CD4-positive, alpha-beta memory T cell (primary cell): ENCODE measurements at regions of chrX and their contacts with region 1.

Region 1: DNA sequence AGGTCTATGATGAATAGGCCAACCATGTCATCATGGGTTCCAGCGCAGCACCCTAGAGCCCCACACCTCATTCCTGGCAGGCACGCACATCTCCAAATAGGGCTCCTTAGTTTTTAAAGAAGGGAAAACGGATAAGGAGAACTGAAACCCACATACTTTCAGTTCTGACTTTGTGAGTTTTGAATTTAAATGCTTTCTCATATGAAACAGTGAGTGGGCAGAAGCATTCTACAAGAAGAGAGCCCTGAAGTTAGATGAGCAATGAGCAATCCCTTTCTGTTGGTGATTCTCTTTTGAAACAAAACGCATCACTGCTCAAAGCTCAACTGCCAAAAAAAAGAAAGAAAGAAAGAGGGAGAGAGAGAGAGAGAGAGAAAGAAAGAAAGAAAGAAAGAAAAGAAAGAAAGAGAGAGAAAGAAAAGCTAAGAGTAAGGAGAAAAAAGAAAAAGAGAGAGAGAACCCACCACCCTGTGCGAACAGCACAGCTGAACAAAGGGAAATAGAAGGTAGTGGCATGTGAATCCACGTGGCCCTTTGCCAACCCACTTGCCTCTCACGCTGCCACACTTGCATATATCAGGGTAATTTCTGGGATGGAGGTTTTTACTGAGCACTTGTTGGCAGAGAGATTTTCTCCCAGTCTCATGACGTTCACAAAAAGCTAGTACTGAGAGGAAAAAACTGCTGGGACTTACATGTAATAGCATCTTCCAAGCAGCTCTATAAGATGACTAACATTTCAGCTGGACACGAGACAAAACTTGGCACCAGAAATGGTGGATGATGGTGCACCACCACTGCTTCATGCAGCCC is 31.0 kb downstream of the TMSB4X start:
- DNase-seq: no peak
- H3K4me3 ChIP-seq: no peak overlapping the region
- H3K4me3 Mint-ChIP-seq: peak overlapping the region; percentile 67 to 89 (median 77)
- H3K27ac ChIP-seq: peak overlapping the region; percentile 50
- H3K27ac Mint-ChIP-seq: peak overlapping the region; percentile 92 to 99 (median 96)
- H3K4me1 ChIP-seq: peaks cover 81% of the 10 kb centered on the region
- H3K4me1 Mint-ChIP-seq: peaks cover 43 to 75% (median 62%) of the 10 kb centered on the region in 4 donors
- H3K27me3 ChIP-seq: no peaks in the 10 kb centered on the region
- H3K27me3 Mint-ChIP-seq: no peaks in the 10 kb centered on the region

Region 2: GRCh38 chrX:13078739-13079444 is 73.0 kb after region 1 on chrX:
- CTCF ChIA-PET with region 1: interaction called, 3 read pairs
- POLR2A ChIA-PET with region 1: interaction called, 53 read pairs
- intact Hi-C with region 1: no loop called
- DNase-seq: no peak
- H3K4me3 ChIP-seq: peak overlapping the region in 1 of 2 donors; percentile 27
- H3K4me3 Mint-ChIP-seq: peak overlapping the region; percentile 33 to 81 (median 66)
- H3K27ac ChIP-seq: peak overlapping the region; percentile 62
- H3K27ac Mint-ChIP-seq: peak overlapping the region; percentile 84 to 95 (median 93)
- H3K4me1 ChIP-seq: peaks cover 100% of the 10 kb centered on the region
- H3K4me1 Mint-ChIP-seq: peaks cover 57 to 96% (median 77%) of the 10 kb centered on the region in 4 donors
- H3K27me3 ChIP-seq: no peaks in the 10 kb centered on the region
- H3K27me3 Mint-ChIP-seq: no peaks in the 10 kb centered on the region